Right ventricle myocardium inferior (tissue), 1 donor: ENCODE measurements at regions of chr9 and their contacts with region 1.

Region 1: DNA sequence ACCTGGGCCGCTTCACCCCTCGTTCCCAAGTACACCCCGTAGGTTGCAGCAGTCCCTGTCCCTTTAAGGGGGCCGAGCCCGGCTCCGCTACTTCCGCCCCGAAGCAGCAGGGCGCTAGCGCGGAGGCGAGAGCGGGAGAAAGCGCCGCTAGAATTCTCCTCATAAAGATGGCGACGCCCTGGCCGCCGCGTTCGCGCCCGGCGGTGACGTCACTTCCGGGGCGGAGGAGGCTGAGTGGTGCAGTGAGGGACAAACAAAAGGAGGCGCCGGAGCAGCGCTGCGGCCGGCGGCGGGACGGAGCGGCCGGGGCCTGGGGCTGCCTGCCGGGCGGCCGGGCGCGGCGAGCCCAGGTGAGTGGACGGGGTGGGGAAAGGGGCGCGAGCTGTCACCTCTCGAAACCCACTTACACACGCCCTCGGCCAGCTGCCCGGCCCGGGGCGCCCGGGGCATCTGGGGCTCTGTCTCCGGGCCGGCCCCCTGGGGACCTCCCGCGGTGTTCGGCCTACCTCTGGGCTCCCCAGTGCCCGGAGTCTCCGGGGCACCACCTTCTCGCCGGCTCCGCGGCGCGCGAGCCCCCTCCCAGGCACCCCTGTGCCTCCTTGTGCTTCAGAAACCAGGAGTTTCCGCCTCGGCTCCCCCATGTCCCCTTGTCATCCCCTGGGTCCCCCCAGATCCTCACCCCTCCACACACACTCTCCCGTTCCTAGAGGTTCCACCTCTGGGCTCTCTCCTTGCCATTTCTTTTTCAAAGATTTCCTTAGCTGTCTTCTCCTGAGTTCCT is at the starts of genes KYAT1 and LRRC8A:
- DNase-seq: peak; percentile 99
- ATAC-seq: peak; percentile 93
- total RNA-seq, gene KYAT1: 11.9 TPM
- total RNA-seq, gene LRRC8A: 23.9 TPM

Region 2: DNA sequence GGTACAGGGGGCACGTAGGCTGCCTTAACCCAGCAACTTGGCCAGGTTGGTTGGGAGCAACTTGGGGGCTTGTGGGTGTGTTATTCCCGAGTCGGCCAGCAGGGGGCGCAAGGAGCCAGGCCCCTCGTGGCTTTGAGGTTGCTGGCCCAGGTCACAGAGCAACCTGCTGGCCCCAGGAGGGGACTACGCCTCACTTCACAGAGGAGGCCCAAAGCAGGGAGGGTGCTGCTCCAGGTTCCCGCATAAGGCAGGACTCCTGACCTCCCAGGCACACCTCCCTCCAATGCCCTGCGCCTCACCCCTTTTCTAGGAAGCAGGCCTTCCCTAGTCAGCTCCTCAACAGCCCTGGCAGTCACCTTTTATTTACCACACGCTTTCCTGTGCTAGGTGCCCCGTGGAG is 18.4 kb before region 1 on chr9:
- intact Hi-C with region 1: loop called (anchors 2 kb)
- DNase-seq: peak; percentile 88
- ATAC-seq: peak; percentile 73

Region 3: DNA sequence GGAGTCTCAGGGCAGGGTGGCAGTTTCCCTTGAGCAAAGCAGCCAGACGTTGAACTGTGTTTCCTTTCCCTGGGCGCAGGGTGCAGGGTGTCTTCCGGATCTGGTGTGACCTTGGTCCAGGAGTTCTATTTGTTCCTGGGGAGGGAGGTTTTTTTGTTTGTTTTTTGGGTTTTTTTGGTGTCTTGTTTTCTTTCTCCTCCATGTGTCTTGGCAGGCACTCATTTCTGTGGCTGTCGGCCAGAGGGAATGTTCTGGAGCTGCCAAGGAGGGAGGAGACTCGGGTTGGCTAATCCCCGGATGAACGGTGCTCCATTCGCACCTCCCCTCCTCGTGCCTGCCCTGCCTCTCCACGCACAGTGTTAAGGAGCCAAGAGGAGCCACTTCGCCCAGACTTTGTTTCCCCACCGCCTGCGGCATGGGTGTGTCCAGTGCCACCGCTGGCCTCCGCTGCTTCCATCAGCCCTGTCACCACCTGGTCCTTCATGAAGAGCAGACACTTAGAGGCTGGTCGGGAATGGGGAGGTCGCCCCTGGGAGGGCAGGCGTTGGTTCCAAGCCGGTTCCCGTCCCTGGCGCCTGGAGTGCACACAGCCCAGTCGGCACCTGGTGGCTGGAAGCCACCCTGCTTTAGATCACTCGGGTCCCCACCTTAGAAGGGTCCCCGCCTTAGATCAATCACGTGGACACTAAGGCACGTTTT is 35.2 kb after region 1 on chr9:
- intact Hi-C with region 1: loop called (anchors 2 kb)
- DNase-seq: peak; percentile 87
- ATAC-seq: peak; percentile 52